Endothelial cell of umbilical vein (primary cell): ENCODE measurements at regions of chr11 and their contacts with region 1.

Region 1: DNA sequence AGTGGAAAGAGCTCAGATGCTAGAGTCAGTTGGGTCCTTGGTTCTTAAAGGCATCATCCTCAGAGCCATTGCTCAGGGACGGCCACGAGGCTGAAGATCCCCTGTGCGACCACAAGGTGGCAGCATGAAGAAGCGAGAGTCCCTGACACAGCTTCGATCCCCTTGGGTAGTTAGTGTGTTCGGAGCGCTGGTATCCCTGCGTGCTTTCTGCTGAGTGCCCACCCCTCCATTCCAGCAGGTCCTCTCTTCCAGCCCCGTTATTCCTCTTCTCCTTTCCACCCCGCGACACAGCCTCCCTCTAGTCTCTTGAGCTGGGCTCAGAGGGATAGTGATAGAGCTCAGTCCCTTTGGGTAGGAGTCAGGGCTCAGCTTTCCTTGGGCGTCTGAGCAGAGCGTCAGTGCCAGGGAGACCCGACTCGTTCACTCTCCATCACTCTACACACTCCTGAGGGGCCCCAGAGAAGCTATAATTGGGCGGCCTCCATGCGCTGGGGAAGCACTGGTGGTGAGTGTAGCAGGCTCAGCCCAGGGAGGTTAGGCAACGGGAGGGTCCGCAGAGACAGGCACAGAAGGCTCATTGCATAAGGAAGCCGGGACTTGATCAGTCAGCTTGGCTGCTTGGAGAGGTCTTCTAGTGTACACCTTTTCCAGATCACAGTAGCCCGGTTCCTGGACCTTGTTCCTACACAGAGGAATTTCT is at the start of gene OR51D1:
- DNase-seq: peak; percentile 66
- H3K4me3 ChIP-seq: no peak within 1 kb of the TSS
- H3K27ac ChIP-seq: no peak within 1 kb of the TSS
- H3K4me1 ChIP-seq: no peaks in the 10 kb centered on the region
- H3K27me3 ChIP-seq: peaks cover 0 to 1% of the 10 kb centered on the region in 2 experiments
- CTCF ChIP-seq: peak; percentile 82 to 93
- POLR2A ChIP-seq: no peak
- total RNA-seq, gene OR51D1: not detected in 2 replicates

Region 2: DNA sequence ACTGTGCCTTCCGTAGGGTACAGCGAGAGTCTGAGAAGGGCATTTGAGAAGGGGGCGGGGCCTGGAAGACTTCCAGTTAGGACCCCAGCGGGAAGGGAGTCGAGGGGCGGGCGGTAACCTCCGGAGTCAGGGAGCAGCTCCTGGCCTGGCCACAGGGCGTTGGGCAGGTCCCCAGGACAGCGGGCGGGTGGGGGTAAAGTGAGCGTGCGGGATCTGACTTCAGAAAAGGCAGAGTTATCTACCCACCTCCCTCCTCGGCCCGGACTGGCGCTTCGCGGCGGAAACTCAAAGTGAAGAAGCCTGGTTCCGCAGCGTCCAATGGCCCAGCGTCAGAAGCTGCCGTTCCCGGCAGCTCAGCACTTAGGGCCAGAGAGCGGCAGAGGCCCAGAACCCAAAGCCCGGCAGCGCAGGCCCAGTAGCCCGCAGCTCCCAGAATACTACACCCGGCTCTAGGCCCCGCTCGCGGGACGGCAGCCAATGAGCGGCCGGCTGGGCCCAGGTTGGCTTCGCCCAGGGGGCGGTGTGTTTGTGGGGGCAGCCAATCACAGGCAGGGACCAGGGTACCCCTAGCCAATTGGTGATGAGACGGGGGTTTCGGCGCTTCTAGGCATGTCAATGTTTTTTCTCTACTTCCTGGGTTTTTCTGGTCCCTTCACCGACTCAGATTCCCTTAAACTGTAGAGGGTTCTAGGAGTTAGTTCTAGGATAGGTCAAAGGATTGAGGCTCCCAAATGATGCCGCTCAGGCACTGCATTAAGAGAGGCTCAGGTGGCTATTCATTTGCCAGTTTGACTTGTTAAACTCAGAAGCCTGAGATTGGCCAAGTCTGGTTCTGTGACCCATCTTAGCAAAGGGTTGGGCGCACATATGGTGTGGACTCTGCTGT is 29.1 kb before region 1 on chr11 and contains the start of gene TRIM68:
- CTCF ChIA-PET with region 1: interaction called, 19 read pairs
- POLR2A ChIA-PET with region 1: no interaction called
- dilution Hi-C with region 1: no loop called
- intact Hi-C with region 1: no loop called
- DNase-seq: peak; percentile 95
- H3K4me3 ChIP-seq: peak within 1 kb of the TSS; percentile 59 to 93 (median 88)
- H3K27ac ChIP-seq: peak within 1 kb of the TSS; percentile 83
- H3K4me1 ChIP-seq: peaks cover 10% of the 10 kb centered on the region
- H3K27me3 ChIP-seq: no peaks in the 10 kb centered on the region
- CTCF ChIP-seq: no peak
- POLR2A ChIP-seq: peak; percentile 81
- total RNA-seq, gene TRIM68: 10.6 and 11.3 TPM in 2 replicates

Region 3: GRCh38 chr11:4647766-4648165 is 10.7 kb after region 1 on chr11:
- CTCF ChIA-PET with region 1: interaction called, 32 read pairs
- POLR2A ChIA-PET with region 1: no interaction called
- dilution Hi-C with region 1: no loop called
- intact Hi-C with region 1: no loop called
- DNase-seq: no peak
- H3K4me3 ChIP-seq: no peak overlapping the region
- H3K27ac ChIP-seq: no peak overlapping the region
- H3K4me1 ChIP-seq: no peaks in the 10 kb centered on the region
- H3K27me3 ChIP-seq: no peaks in the 10 kb centered on the region
- CTCF ChIP-seq: no peak
- POLR2A ChIP-seq: no peak

Region 4: DNA sequence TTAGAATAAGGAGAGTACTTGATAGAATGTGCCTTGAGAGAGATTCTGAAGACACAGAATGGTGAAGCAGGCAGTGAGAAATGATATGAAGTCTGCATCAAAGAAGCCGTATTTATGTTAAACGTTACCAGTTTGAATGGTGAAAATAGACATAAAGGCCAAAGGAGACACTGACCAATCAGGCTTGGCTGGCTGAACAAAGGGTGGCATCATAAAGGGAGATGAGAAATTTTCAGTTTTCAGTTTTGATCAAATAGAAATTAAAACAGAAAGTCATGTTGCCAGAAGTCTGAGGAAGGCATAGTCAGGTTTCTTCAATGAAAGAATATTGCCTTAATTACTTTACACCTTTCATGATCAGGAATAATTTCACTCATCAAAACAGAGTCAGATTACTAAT is 126.0 kb after region 1 on chr11:
- CTCF ChIA-PET with region 1: no interaction called
- POLR2A ChIA-PET with region 1: no interaction called
- dilution Hi-C with region 1: no loop called
- intact Hi-C with region 1: no loop called
- DNase-seq: no peak
- H3K4me3 ChIP-seq: no peak overlapping the region
- H3K27ac ChIP-seq: no peak overlapping the region
- H3K4me1 ChIP-seq: no peaks in the 10 kb centered on the region
- H3K27me3 ChIP-seq: no peaks in the 10 kb centered on the region
- CTCF ChIP-seq: no peak
- POLR2A ChIP-seq: no peak

Region 5: GRCh38 chr11:5369793-5370192 is 732.7 kb after region 1 on chr11:
- CTCF ChIA-PET with region 1: interaction called, 24 read pairs
- POLR2A ChIA-PET with region 1: no interaction called
- dilution Hi-C with region 1: no loop called
- intact Hi-C with region 1: loop called (anchors 1 kb)
- DNase-seq: peak; percentile 66
- H3K4me3 ChIP-seq: no peak overlapping the region
- H3K27ac ChIP-seq: no peak overlapping the region
- H3K4me1 ChIP-seq: peaks cover 19% of the 10 kb centered on the region
- H3K27me3 ChIP-seq: no peaks in the 10 kb centered on the region
- CTCF ChIP-seq: peak; percentile 32 to 34
- POLR2A ChIP-seq: no peak

Region 6: GRCh38 chr11:5891216-5891800 is 1254.2 kb after region 1 on chr11:
- CTCF ChIA-PET with region 1: interaction called, 26 read pairs
- POLR2A ChIA-PET with region 1: no interaction called
- dilution Hi-C with region 1: no loop called
- intact Hi-C with region 1: no loop called
- DNase-seq: peak; percentile 32
- H3K4me3 ChIP-seq: no peak overlapping the region
- H3K27ac ChIP-seq: no peak overlapping the region
- H3K4me1 ChIP-seq: no peaks in the 10 kb centered on the region
- H3K27me3 ChIP-seq: no peaks in the 10 kb centered on the region
- CTCF ChIP-seq: peak in 1 of 2 donors; percentile 13
- POLR2A ChIP-seq: no peak